Aorta (tissue), 5 donors: ENCODE measurements at regions of chr10 and their contacts with region 1.

Region 1: DNA sequence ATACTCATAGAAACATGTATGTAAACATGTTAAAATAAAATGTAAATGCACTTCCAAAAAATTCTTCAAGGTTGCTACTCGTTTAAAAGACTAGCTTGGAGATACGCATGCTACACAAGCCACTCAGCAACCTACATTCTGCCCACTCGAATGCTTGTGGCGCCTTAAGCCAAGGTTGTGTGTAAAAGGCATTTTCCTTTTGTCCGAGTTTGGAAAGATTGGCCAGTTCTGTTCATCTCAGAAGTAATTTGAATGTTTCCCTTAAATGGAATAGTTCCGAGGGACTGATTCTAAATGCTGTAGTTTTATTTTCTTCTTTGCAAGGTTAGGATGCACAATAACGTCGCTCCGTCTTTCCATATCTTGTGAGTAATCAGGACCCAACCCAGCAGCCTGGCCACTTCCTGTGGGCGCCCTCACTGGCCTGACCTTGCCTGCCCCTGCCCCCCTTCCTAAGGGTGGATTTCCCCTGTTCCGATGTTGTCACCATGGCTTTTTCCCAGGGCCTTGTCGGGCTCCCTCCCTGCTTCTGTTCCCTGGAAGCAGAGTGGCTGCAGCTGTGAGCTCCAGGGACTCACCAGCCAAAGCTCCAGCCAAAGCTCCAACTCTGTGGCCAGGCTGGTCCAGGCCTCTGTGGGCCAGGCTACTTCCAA is 70.6 kb downstream of the PTPRE start:
- DNase-seq: peak; percentile 91 to 93
- ATAC-seq: peak; percentile 91
- H3K4me3 ChIP-seq: no peak overlapping the region
- H3K27ac ChIP-seq: peak overlapping the region; percentile 23 to 55
- H3K4me1 ChIP-seq: no peaks in the 10 kb centered on the region
- H3K27me3 ChIP-seq: no peaks in the 10 kb centered on the region

Region 2: DNA sequence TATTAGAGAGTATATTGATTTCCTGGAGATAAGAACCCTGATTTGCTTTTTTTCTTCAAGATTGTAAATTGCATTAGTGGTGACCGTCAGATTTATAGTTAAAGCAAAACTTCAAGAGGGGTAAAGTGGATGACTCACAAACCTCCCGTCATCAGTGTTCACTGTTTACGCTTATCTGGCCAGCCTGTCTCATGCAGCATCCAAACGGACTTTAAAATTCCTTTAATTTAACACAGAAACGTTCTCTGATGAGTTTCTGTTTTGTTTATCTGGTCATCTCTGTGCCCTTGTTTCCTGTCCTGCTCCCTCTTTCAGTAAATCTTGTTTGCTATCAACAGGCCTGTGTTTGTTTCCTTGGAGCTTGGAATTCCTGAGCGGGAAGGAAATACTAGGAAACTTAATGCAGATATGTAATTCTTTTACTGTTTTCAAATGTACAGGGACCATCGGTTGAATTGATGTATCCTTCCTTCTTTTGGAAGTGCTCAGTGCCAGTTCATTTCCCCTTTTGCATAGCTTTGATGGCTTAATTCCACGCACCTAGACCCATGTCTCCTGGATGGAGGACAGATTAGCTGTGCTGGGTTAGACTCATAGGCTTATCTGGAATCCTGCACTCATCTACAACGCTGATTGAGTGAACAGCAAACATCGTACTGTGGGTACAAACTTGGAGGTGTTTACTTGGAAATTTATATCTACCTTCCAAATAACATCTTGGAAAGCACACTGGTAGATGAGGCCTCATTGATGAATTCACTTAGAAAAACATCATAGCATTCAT is 49.3 kb before region 1 on chr10:
- intact Hi-C with region 1: loop called (anchors 5 kb)
- DNase-seq: no peak
- ATAC-seq: no peak
- H3K4me3 ChIP-seq: no peak overlapping the region
- H3K27ac ChIP-seq: no peak overlapping the region
- H3K4me1 ChIP-seq: no peaks in the 10 kb centered on the region
- H3K27me3 ChIP-seq: no peaks in the 10 kb centered on the region

Region 3: DNA sequence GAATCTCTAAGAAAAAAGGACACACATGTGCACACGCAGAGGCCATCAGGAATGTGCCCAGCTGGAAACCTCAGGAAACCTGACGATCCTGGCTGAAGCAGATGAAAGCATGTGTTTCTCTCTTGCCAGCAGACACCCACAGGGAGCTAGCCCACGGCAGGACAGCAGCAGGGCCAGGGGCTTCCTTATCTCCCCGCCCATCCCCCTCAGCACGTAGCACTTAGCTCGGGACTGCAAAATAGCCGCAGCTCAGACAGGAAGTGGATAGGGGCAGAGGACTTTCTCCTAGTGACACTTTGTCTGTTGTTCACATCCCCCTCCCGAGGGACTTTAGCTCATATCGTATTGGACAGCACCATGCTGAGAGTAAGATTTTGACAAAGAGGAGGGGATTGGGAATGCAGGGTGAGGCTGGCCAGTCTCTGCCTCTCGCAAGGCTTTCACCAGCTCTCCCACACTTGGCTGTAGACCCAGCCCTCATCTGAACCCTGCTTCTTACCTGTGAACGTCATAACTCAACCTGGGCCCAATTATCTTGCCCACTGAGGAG is 84.9 kb after region 1 on chr10:
- intact Hi-C with region 1: no loop called
- DNase-seq: peak; percentile 60 to 67
- ATAC-seq: no peak
- H3K4me3 ChIP-seq: no peak overlapping the region
- H3K27ac ChIP-seq: peak overlapping the region in 1 of 2 donors; percentile 16
- H3K4me1 ChIP-seq: peaks cover 3 to 5% of the 10 kb centered on the region in 2 donors
- H3K27me3 ChIP-seq: no peaks in the 10 kb centered on the region

Region 4: DNA sequence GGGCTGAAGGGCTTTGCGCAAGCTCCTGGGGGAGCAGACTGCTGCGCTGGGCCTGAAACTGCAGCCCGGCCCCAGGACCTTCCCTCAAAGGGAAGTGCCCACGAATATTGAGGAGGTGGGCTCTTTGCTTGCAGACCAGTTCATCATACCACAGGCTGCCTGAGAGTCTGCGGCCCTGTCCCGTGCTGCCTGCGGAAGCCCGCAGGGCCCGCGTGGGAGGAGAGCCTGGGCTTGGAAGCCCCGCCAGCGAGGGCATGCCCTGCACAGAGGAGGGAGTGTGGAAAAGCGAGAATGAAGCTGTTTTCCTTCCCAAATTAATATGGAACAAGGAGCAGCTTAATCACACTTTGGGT is 232.4 kb after region 1 on chr10:
- intact Hi-C with region 1: no loop called
- DNase-seq: no peak
- ATAC-seq: no peak
- H3K4me3 ChIP-seq: no peak overlapping the region
- H3K27ac ChIP-seq: no peak overlapping the region
- H3K4me1 ChIP-seq: no peaks in the 10 kb centered on the region
- H3K27me3 ChIP-seq: no peaks in the 10 kb centered on the region

Region 5: DNA sequence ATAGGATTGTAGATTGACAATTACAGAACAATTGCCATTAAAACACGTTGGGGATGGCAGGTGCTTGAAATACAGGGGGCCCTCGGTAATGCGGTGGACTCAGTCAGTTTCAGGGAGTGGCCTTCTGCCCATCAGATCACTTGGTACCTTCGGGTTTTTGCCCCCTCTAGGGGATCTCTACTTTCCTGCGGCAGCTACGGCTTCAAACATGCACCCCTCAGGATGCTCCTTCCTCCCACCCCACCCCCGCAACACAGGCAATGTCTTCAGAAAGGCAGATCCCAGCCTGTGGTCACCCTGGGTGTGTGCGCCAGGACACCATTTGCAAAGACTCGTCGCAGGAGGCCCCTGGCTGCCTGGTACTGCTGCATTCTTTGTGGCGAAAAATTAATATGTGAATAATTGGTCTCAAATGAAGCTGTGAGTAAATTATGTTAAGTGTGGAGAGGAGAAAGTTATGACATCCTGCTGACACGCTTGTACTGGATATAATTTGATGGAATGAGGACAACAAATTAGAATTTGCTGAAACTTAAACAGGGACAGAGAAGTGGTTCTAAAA is 579.7 kb after region 1 on chr10:
- intact Hi-C with region 1: no loop called
- DNase-seq: no peak
- ATAC-seq: no peak
- H3K4me3 ChIP-seq: no peak overlapping the region
- H3K27ac ChIP-seq: no peak overlapping the region
- H3K4me1 ChIP-seq: no peaks in the 10 kb centered on the region
- H3K27me3 ChIP-seq: no peaks in the 10 kb centered on the region